ENCODE measurements at regions of chr3 and their contacts with region 1.

Region 1: DNA sequence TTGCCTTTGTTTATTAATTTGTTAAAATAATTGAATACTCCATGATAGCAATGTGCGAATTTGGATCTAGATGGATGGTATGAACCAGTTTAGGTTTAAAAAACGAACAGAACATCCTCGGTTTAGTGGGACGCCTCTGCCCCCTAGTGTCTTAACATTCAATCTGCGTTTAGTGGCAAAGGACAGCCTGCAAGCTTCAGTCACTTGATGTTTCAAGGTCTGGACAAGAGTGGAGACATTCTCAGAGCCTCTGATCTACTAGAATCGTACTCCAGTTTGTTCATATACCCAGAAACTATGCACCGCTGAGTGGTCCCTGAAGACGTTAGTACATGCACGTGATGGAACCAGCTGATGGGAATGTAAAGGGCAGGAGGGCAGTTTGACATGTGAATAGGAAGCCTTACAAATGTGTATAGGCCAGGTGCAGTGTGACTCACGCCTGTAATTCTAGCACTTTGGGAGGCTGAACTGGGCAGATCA is 17.8 kb upstream of the ATP13A4 start:
- DNase-seq: peak; percentile 46
- H3K4me3 ChIP-seq: no peak overlapping the region
- H3K27ac ChIP-seq: no peak overlapping the region
- H3K4me1 ChIP-seq: no peaks in the 10 kb centered on the region
- H3K27me3 ChIP-seq: no peaks in the 10 kb centered on the region
- CTCF ChIP-seq: peak; percentile 83 to 86

Region 2: DNA sequence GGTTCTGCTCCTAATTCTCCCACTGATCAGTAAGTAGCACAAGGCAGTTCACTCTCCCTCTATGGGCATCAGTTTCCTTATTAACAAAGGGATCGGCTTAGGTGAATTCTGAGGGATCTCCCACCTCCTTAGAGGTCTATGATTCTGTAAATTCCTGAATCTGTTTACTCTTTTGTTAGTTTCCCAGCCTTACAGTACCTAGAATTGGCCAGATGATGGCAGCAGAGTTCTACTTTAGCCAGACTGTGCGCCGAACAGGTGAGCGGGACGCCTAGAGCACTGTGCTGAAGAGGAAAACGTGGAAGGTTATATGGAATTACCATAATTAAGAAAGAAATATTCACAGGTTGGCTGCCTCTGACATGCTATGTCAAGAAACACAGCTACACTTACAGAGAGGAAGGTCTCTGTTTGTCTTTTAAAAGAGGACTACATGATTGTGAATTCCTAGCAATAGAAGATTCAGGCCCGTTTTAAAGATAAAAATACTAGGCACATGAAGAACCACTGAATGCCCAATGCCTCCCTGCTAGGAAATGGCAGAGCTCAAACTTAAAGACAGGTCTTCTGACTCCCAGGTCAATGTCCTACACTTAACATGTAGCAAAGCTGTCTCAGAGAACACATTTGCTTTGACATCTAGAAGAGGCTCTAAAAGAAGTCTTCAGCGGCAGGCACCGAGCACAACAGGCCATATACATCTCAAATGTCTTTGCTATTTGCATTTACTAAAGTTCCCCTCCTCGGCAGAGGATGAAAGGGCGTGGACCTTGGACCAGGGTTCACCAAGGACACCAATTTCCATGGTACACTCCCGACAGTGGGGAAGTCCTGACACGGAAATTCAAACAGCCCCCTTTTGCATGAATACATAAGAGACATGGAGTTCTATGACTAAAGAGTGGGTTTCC is 1105.0 kb before region 1 on chr3:
- CTCF ChIA-PET with region 1: no interaction called
- dilution Hi-C with region 1: no loop called
- in situ Hi-C with region 1: no loop called
- intact Hi-C with region 1: loop called (anchors 5 kb)
- DNase-seq: peak; percentile 47
- H3K4me3 ChIP-seq: no peak overlapping the region
- H3K27ac ChIP-seq: no peak overlapping the region
- H3K4me1 ChIP-seq: no peaks in the 10 kb centered on the region
- H3K27me3 ChIP-seq: no peaks in the 10 kb centered on the region
- CTCF ChIP-seq: peak; percentile 91 to 93

Region 3: GRCh38 chr3:192816351-192816750 is 756.1 kb before region 1 on chr3:
- CTCF ChIA-PET with region 1: no interaction called
- dilution Hi-C with region 1: no loop called
- in situ Hi-C with region 1: loop called (anchors 5 to 10 kb)
- intact Hi-C with region 1: loop called (anchors 2 kb)
- DNase-seq: peak; percentile 47
- H3K4me3 ChIP-seq: no peak overlapping the region
- H3K27ac ChIP-seq: no peak overlapping the region
- H3K4me1 ChIP-seq: peaks cover 30% of the 10 kb centered on the region
- H3K27me3 ChIP-seq: no peaks in the 10 kb centered on the region
- CTCF ChIP-seq: peak; percentile 49 to 63

Region 4: DNA sequence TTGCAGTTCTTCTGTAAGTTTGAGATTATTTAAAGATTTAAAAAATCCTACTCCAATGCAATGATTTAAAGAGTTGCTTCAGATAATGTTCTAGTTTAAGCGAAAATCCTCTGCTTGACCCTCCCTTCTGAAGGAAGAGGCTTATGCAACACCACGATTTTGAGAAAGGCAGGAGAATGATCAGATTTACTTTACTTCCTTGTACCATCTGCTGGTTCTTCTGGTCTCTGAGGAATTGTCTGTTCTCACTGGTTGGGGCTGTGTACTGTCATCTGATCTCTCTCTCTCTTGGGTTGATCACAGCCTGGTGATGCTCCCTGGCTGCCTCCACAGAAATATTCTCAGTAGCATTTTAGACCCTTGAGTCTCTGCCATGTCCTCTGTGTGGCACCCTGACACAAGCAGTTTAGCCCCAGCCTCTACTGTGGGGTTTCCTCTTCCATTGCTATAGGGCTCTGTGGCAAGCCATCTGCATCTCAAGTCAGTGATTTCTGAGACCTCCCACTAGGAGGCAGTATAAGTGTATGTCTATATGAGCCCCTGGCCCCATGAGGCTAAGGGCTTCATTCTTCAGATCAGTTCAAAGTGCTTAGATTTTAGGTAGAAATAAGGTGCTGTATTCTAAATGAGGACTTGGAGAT is 382.2 kb before region 1 on chr3:
- CTCF ChIA-PET with region 1: no interaction called
- dilution Hi-C with region 1: no loop called
- in situ Hi-C with region 1: loop called in 1 of 2 experiments (anchors 25 kb)
- intact Hi-C with region 1: loop called (anchors 1 kb)
- DNase-seq: peak; percentile 21
- H3K4me3 ChIP-seq: no peak overlapping the region
- H3K27ac ChIP-seq: no peak overlapping the region
- H3K4me1 ChIP-seq: no peaks in the 10 kb centered on the region
- H3K27me3 ChIP-seq: no peaks in the 10 kb centered on the region
- CTCF ChIP-seq: peak; percentile 46 to 73

Region 5: GRCh38 chr3:193465992-193466608 is 106.4 kb before region 1 on chr3:
- CTCF ChIA-PET with region 1: no interaction called
- dilution Hi-C with region 1: loop called (anchors 5 kb)
- in situ Hi-C with region 1: loop called in 1 of 2 experiments (anchors 10 kb)
- intact Hi-C with region 1: loop called (anchors 1 kb)
- DNase-seq: no peak
- H3K4me3 ChIP-seq: no peak overlapping the region
- H3K27ac ChIP-seq: no peak overlapping the region
- H3K4me1 ChIP-seq: no peaks in the 10 kb centered on the region
- H3K27me3 ChIP-seq: peaks cover 4% of the 10 kb centered on the region
- CTCF ChIP-seq: no peak

Region 6: GRCh38 chr3:193982258-193982659 is 409.8 kb after region 1 on chr3:
- CTCF ChIA-PET with region 1: no interaction called
- dilution Hi-C with region 1: no loop called
- in situ Hi-C with region 1: no loop called
- intact Hi-C with region 1: no loop called
- DNase-seq: peak; percentile 61
- H3K4me3 ChIP-seq: no peak overlapping the region
- H3K27ac ChIP-seq: no peak overlapping the region
- H3K4me1 ChIP-seq: peaks cover 16% of the 10 kb centered on the region
- H3K27me3 ChIP-seq: no peaks in the 10 kb centered on the region
- CTCF ChIP-seq: no peak